ENCODE measurements at regions of chr17 and their contacts with region 1.

Region 1: DNA sequence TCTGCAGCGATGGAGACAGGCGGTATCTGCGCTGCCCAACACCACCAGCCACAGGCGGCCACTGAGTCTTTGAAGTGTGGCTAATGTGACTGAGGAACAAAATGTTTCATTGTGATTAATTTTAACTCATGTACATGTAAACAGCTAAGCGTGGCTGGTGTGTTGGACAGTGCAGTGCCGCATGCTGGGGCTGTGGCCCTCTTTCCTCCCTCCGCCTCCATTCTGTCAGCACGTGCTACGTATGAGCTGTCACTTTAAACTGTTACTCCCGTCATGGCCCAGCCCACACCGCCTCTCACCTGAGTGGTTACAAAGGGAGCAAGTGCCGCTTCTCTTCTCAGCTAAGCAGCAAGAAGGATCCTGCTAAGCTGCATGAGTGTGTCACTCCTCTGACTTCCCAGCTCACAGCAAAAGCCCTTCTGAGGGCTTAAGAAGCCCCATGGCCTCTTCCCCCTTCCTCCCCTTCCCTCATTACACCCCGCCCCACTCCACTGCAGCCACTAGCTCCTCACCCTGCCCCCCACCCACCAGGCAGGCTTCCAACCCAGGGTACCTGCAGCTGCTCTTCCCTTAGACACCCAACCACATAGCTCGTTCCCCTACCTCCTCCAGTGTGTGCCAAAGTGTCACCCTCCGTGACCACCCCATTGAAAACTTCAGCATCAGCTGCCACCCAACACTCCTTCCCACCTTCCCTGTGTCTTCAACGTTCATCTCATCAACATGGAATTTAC is 15.0 kb downstream of the HASPIN start:
- DNase-seq: peak; percentile 68
- H3K4me3 ChIP-seq: no peak overlapping the region
- H3K27ac ChIP-seq: peak overlapping the region; percentile 24 to 45 (median 42)
- H3K4me1 ChIP-seq: peaks cover 8 to 21% (median 15%) of the 10 kb centered on the region in 4 donors
- H3K27me3 ChIP-seq: no peaks in the 10 kb centered on the region
- CTCF ChIP-seq: no peak
- EP300 ChIP-seq: no peak
- POLR2A ChIP-seq: no peak

Region 2: GRCh38 chr17:3827124-3827773 is 88.5 kb after region 1 on chr17:
- in situ Hi-C with region 1: loop called (anchors 10 to 25 kb)
- intact Hi-C with region 1: no loop called
- DNase-seq: peak; percentile 64
- H3K4me3 ChIP-seq: no peak overlapping the region
- H3K27ac ChIP-seq: peak overlapping the region in 2 of 4 donors; percentile 52 to 65
- H3K4me1 ChIP-seq: peaks cover 0 to 14% (median 7%) of the 10 kb centered on the region in 4 donors
- H3K27me3 ChIP-seq: no peaks in the 10 kb centered on the region
- CTCF ChIP-seq: peak; percentile 46 to 66 (median 56)
- EP300 ChIP-seq: no peak
- POLR2A ChIP-seq: no peak

Region 3: DNA sequence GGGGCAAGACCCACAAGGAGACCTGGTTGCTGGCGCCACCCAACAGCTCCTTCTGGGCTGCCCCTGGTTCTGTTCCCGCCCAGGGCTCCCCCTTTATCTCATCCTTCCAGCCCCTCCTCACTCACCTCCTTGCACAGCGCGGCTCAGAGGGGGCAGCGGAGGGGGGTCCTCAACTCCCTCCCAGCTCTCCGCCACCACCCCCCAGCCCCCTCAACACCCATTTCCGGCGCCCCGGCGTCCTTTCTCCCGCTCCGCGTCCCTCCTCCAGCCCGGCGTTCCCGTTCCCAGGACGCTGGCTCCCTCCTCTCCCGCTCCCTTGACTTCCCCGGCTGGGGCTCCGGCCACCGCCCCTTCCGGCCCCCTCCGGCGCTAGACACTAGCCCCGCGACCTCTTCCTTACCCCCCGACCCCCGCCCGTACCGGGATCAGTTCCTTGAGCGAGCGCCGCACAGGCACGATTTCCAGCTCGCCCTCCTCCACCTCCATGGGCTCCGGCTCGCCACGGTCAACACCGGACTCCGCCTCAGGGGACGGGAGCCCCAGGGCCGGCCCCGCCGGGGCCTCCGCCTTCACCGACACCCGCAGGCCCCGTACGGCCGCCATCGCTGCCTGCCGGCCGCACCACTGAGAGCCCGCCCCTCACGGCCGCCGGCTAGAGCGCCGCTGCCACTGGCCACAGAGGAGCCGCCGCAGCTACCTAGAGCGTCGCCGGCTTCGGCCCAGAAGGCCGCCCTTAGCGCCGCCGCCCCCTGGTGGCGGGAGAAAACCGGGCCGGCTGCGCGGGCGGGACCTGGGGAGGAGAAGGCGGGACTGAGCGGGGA is 107.1 kb after region 1 on chr17 and contains the start of gene NCBP3:
- in situ Hi-C with region 1: loop called in 2 of 4 experiments (anchors 25 kb)
- intact Hi-C with region 1: no loop called
- DNase-seq: peak; percentile 93
- H3K4me3 ChIP-seq: peak within 1 kb of the TSS; percentile 73 to 99 (median 89)
- H3K27ac ChIP-seq: peak within 1 kb of the TSS; percentile 85 to 97 (median 93)
- H3K4me1 ChIP-seq: peaks cover 0 to 25% (median 13%) of the 10 kb centered on the region in 4 donors
- H3K27me3 ChIP-seq: no peaks in the 10 kb centered on the region
- CTCF ChIP-seq: peak; percentile 88 to 98 (median 97)
- EP300 ChIP-seq: no peak
- POLR2A ChIP-seq: peak; percentile 93
- total RNA-seq, gene NCBP3: 28.9 to 55.6 (median 45.8) TPM

Measured in transverse colon (tissue), 4 donors.